ENCODE measurements at regions of chr17 and their contacts with region 1.

Region 1: GRCh38 chr17:20992987-20993862 is 49.6 kb downstream of the USP22 start:
- DNase-seq: no peak
- ATAC-seq: peak; percentile 54

Region 2: GRCh38 chr17:20896153-20896649 is 97.0 kb before region 1 on chr17:
- intact Hi-C with region 1: no loop called
- DNase-seq: peak; percentile 67
- ATAC-seq: peak; percentile 42

Region 3: DNA sequence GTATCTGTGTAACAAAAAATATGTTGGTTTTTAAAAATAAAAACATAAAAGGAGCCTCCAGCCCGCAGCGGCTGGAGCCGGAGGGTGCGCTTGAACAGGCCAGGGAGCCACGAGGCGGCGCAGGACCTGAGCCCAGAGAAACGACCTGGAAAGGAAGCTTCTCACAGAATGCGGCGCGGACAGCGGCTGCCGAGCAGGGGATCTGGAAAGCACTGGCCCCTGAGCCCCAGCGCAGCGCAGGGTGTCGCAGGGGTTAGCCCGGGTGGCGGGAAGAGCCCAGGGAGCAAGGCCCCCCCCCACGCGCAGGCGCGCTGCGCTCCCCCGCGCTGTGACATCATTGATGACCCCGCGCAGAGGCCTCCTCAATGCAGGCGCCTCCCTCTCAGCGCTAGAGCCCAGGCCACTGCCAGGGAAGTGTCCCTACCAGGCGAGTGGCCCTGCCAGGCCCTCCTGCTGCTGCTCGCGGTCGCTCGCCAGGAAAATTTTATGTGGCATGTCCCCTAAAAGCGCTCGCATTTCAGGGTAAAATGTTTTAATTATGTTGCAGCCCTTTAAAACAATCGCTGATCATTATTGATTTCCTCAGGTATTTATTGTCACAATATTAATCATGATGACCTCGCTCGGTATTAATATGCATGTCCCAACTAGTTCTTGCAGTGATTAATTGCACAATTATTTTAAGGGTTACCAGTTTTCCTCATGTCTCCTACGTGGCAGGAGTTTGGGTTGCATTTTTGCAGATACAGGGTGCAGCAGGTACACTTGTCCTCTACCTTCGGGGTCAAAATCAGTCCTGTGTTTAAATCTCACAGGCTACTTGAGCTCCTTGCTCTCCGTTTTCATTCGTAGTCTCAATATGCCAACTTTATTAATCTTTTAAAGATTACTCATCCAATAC is 84.6 kb before region 1 on chr17:
- intact Hi-C with region 1: loop called (anchors 1 kb)
- DNase-seq: peak; percentile 94
- ATAC-seq: peak; percentile 100

Region 4: DNA sequence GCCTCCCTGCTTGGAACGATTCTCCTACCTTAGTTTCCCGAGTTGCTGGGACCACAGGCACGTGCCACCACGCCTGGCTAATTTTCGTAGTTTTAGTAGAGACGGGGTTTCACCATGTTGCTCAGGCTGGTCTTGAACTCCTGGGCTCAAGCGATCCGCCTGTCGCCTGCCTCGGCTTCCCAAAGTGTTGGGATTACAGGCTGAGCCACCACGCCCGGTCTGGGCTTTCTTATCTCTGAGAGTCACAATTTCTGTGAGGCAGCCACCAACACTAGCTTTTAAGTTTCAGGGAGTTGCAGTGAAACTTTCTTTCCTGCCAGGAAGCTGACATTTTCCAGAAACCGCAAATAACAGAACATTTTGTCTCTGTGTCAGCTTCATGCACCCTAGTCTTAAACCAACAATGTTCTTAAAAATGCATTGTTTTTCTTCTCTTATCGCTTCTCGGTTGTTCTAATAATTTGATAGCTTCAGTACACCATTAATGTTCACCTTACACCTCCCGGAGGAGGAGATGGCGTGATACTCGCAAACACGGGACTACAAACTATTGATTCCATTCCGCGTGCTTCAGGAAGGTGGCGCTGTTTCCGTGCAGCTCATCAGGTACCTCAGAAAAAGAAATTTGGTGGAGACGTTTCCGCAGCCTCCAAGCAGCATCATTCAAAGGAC is 126.2 kb after region 1 on chr17:
- intact Hi-C with region 1: no loop called
- DNase-seq: peak; percentile 86
- ATAC-seq: peak; percentile 59

Measured in Right ventricle myocardium inferior (tissue), 1 donor.